ENCODE measurements at regions of chr13 and their contacts with region 1.

Region 1: DNA sequence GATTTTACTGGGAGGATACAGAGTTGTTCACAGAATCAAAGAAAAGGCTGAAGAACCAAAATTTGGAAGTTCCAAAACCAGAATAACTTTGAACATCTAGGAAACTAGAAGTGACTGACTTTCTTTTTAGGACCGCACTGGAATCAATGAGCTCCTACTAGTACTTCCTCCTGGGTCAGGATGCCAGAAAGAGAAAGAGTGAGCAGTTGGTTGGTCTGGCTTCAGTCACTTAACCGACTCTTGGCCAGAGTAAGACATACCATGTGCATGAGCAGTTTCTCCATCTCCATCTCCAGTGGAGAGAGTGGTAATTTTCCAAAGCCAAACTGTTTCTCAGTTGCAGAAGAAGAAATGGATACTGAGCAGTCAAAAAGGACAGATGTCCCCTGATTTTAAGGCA is 27.1 kb upstream of the MTUS2 start:
- DNase-seq: no peak
- H3K4me3 ChIP-seq: no peak overlapping the region
- H3K27ac ChIP-seq: no peak overlapping the region
- H3K4me1 ChIP-seq: no peaks in the 10 kb centered on the region
- CTCF ChIP-seq: no peak

Region 2: GRCh38 chr13:28067491-28067890 is 725.5 kb before region 1 on chr13:
- CTCF ChIA-PET with region 1: no interaction called
- POLR2A ChIA-PET with region 1: no interaction called
- intact Hi-C with region 1: loop called (anchors 10 kb)
- DNase-seq: no peak
- H3K4me3 ChIP-seq: no peak overlapping the region
- H3K27ac ChIP-seq: no peak overlapping the region
- H3K4me1 ChIP-seq: no peaks in the 10 kb centered on the region
- CTCF ChIP-seq: no peak

Region 3: DNA sequence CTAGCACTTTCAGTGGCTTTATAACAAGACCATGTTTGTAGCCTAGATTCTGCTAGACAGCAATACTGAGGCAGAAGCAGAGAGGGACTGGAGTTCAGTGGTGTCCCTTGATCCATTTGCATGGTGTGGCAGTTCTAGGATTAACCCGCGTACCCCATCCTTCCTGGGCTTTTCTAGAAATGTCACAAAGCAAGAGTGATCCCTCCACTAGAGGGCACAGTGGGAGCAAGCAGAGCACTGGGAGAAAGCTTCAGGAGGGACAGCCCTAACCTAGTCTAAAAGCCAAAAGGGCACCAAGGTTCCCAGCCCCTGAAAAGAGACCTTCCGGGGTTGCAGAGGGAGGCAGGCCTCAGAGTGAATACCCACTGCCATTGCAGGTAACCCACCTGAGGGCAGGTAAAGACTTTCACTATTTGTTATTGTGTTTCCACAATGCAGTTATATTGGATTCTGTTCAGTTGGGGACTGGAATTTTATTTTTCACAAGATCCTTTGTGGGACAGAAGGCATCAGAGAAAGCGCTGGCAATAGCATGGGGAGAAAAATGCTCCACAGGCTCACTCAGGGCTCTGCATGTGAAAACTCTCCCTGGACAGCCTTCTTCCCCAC is 468.7 kb before region 1 on chr13:
- CTCF ChIA-PET with region 1: no interaction called
- POLR2A ChIA-PET with region 1: no interaction called
- intact Hi-C with region 1: loop called (anchors 1 kb)
- DNase-seq: peak; percentile 76
- H3K4me3 ChIP-seq: no peak overlapping the region
- H3K27ac ChIP-seq: no peak overlapping the region
- H3K4me1 ChIP-seq: no peaks in the 10 kb centered on the region
- CTCF ChIP-seq: peak; percentile 87

Region 4: GRCh38 chr13:28679628-28680027 is 113.4 kb before region 1 on chr13:
- CTCF ChIA-PET with region 1: no interaction called
- POLR2A ChIA-PET with region 1: no interaction called
- intact Hi-C with region 1: loop called (anchors 10 kb)
- DNase-seq: no peak
- H3K4me3 ChIP-seq: no peak overlapping the region
- H3K27ac ChIP-seq: no peak overlapping the region
- H3K4me1 ChIP-seq: no peaks in the 10 kb centered on the region
- CTCF ChIP-seq: peak; percentile 68

Region 5: GRCh38 chr13:28778308-28779215 is 14.4 kb before region 1 on chr13:
- CTCF ChIA-PET with region 1: no interaction called
- POLR2A ChIA-PET with region 1: no interaction called
- intact Hi-C with region 1: no loop called
- DNase-seq: no peak
- H3K4me3 ChIP-seq: no peak overlapping the region
- H3K27ac ChIP-seq: no peak overlapping the region
- H3K4me1 ChIP-seq: no peaks in the 10 kb centered on the region
- CTCF ChIP-seq: no peak

Measured in OCI-LY7 (cell line).